ENCODE measurements at regions of chr3 and their contacts with region 1.

Region 1: GRCh38 chr3:8441969-8442559 is 59.6 kb upstream of the LMCD1 start:
- H3K4me3 ChIP-seq: no peak overlapping the region
- H3K27ac ChIP-seq: no peak overlapping the region
- H3K4me1 ChIP-seq: peaks cover 7% of the 10 kb centered on the region; the same call in 1 of the 2 replicates
- CTCF ChIP-seq: peak; percentile 55

Region 2: DNA sequence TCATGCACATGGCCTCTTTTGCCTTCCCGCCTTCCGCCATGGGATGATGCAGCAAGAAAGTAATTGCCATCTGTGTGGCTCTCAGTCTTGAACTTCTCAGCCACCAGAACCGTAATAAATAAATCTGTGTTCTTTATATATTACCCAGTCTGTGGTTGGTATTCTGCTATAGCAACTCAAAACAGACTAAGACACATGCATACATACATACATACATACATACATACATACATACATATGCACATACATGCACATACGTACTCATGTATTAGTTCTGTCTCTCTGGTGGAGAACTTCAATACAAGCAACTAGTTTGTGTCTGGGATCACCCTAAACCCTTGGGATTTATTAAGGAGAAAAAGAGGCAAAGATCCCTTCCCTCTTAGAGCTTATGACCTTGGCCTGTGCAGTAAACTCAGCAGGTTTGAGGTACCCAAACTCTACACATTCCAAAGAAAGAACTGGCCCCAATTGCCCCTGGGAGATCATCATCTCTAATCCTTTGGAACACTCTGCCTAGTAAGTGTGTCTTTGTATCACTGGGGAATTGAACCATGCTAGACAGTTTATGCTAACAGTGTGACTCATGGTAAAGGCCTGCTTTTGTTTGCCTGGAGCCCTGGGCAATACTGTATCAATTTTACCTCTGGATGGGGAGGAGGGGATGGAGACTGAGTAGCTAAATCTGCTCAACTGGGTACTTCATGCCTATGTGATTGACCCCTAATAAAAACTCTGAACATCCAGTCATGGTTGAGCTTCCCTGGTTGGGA is 56.0 kb before region 1 on chr3:
- CTCF ChIA-PET with region 1: no interaction called
- POLR2A ChIA-PET with region 1: no interaction called
- H3K4me3 ChIP-seq: no peak overlapping the region
- H3K27ac ChIP-seq: no peak overlapping the region
- H3K4me1 ChIP-seq: no peaks in the 10 kb centered on the region
- CTCF ChIP-seq: no peak

Region 3: GRCh38 chr3:8501371-8502131 is 59.5 kb after region 1 on chr3 and contains the start of gene LMCD1:
- CTCF ChIA-PET with region 1: interaction called, 27 read pairs
- POLR2A ChIA-PET with region 1: interaction called, 4 read pairs
- H3K4me3 ChIP-seq: peak within 1 kb of the TSS; percentile 38
- H3K27ac ChIP-seq: peak within 1 kb of the TSS; percentile 88
- H3K4me1 ChIP-seq: peaks cover 42% of the 10 kb centered on the region
- CTCF ChIP-seq: peak; percentile 7; the same call in 1 of the 2 replicates

Region 4: GRCh38 chr3:8607234-8608040 is 165.4 kb after region 1 on chr3:
- CTCF ChIA-PET with region 1: interaction called, 21 read pairs
- POLR2A ChIA-PET with region 1: no interaction called
- H3K4me3 ChIP-seq: no peak overlapping the region
- H3K27ac ChIP-seq: no peak overlapping the region
- H3K4me1 ChIP-seq: no peaks in the 10 kb centered on the region
- CTCF ChIP-seq: peak; percentile 80

Region 5: DNA sequence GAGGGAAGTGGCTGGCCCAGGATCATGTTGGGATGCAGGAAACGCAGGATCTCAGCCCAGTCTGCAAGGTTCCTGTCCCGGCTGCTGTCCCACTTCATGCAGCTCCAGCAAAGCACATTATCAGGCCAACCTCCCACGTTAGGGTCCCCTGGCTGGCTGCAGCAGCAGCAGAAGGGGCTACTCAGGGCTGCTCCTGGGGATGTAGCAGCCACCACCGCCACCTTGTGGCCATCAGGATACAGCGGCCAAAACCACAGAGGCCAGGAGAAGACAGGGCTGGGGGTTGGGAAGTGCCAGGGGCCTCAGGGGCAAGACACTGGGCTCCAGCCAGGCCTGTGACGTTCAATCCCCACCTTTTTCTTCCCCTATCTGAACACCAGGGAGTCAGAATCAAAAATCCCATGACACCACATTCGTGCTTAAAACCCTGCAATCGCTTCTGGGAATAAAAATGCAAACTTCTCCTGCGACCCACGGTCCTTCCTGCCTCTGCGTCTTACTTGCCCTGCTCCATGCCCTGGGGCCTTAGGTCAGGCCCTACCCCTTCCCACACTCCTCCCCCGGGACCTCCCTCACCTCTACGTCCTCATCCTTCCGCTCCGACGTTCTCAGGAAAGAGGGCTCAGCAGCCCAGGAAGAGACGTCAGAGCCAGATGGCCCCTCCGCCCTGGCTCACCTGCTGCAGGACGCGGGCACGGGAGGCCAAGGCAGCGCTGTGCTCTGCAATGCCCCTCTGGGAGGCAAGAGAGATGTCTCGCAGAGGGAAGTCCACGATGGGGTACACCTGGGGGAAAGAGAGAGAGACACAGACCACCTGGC is 181.0 kb after region 1 on chr3:
- CTCF ChIA-PET with region 1: interaction called, 18 read pairs
- POLR2A ChIA-PET with region 1: no interaction called
- H3K4me3 ChIP-seq: no peak overlapping the region
- H3K27ac ChIP-seq: no peak overlapping the region
- H3K4me1 ChIP-seq: no peaks in the 10 kb centered on the region
- CTCF ChIP-seq: peak; percentile 80